PC-3 (cell line): ENCODE measurements at regions of chr4 and their contacts with region 1.

Region 1: GRCh38 chr4:11635359-11636072 is 206.8 kb upstream of the HS3ST1 start:
- DNase-seq: peak; percentile 89
- ATAC-seq: peak; percentile 65
- H3K4me3 ChIP-seq: no peak overlapping the region
- H3K27ac ChIP-seq: peak overlapping the region; percentile 98
- H3K4me1 ChIP-seq: peaks cover 62% of the 10 kb centered on the region
- H3K27me3 ChIP-seq: no peaks in the 10 kb centered on the region
- CTCF ChIP-seq: no peak

Region 2: GRCh38 chr4:11585506-11585905 is 50.0 kb before region 1 on chr4:
- CTCF ChIA-PET with region 1: no interaction called
- POLR2A ChIA-PET with region 1: no interaction called
- intact Hi-C with region 1: no loop called
- DNase-seq: peak; percentile 79
- ATAC-seq: peak; percentile 97
- H3K4me3 ChIP-seq: no peak overlapping the region
- H3K27ac ChIP-seq: peak overlapping the region; percentile 65
- H3K4me1 ChIP-seq: peaks cover 25% of the 10 kb centered on the region
- H3K27me3 ChIP-seq: no peaks in the 10 kb centered on the region
- CTCF ChIP-seq: no peak

Region 3: GRCh38 chr4:11614399-11614798 is 21.1 kb before region 1 on chr4:
- CTCF ChIA-PET with region 1: no interaction called
- POLR2A ChIA-PET with region 1: no interaction called
- intact Hi-C with region 1: loop called (anchors 1 kb)
- DNase-seq: peak; percentile 94
- ATAC-seq: peak; percentile 91
- H3K4me3 ChIP-seq: peak overlapping the region; percentile 30; the same call in 1 of the 2 replicates
- H3K27ac ChIP-seq: peak overlapping the region; percentile 95
- H3K4me1 ChIP-seq: peaks cover 50% of the 10 kb centered on the region
- H3K27me3 ChIP-seq: no peaks in the 10 kb centered on the region
- CTCF ChIP-seq: no peak

Region 4: DNA sequence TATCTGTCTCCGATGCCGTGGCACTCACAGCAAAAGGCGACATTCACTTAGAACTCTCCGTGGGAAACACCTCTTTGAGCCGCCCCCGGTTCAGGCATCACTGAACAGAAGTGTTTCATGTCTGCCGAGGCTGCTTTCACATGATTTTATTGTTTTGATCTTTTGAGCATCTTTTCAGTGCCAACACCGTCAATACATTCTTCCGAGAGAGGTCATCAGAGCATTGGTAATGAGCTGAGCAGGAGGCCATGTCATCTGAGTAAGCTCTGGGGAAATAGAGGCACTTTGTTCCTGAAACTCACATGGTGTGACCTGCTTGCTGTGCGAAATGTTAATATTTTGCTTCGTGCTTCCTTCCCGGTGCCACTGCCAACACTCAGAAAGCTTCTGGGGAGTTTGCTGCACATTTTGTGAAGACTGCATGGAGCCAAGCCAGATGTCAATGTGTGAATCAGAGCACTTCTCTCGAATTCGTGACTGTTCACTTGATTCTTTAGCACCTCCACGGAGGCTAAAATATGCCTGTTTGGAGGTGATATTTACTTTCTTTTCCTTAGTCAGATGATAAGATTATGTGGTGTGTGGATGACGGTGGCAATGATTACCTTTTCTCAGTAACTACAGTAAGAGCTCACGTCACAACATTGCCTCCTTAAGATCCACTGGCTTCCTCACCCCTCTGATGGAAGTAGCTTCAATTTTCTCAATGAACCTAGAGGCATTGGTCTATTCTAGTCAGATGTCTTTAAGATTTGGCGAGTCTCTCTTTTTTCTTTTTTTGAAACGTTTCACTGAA is 15.5 kb after region 1 on chr4:
- CTCF ChIA-PET with region 1: no interaction called
- POLR2A ChIA-PET with region 1: interaction called, 10 read pairs
- intact Hi-C with region 1: no loop called
- DNase-seq: peak; percentile 50
- ATAC-seq: peak; percentile 73
- H3K4me3 ChIP-seq: peak overlapping the region; percentile 51
- H3K27ac ChIP-seq: peak overlapping the region; percentile 69
- H3K4me1 ChIP-seq: peaks cover 8% of the 10 kb centered on the region
- H3K27me3 ChIP-seq: no peaks in the 10 kb centered on the region
- CTCF ChIP-seq: 0 out of 2 replicates have a peak, but pooled peaks have one; percentile 11

Region 5: GRCh38 chr4:11698846-11699590 is 63.5 kb after region 1 on chr4:
- CTCF ChIA-PET with region 1: interaction called, 3 read pairs
- POLR2A ChIA-PET with region 1: interaction called, 9 read pairs
- intact Hi-C with region 1: loop called (anchors 2 kb)
- DNase-seq: peak; percentile 92
- ATAC-seq: peak; percentile 90
- H3K4me3 ChIP-seq: peak overlapping the region; percentile 20; the same call in 1 of the 2 replicates
- H3K27ac ChIP-seq: peak overlapping the region; percentile 95
- H3K4me1 ChIP-seq: peaks cover 58% of the 10 kb centered on the region
- H3K27me3 ChIP-seq: no peaks in the 10 kb centered on the region
- CTCF ChIP-seq: no peak

Region 6: GRCh38 chr4:11805842-11806241 is 170.3 kb after region 1 on chr4:
- CTCF ChIA-PET with region 1: no interaction called
- POLR2A ChIA-PET with region 1: no interaction called
- intact Hi-C with region 1: no loop called
- DNase-seq: peak; percentile 37
- ATAC-seq: peak; percentile 76
- H3K4me3 ChIP-seq: no peak overlapping the region
- H3K27ac ChIP-seq: no peak overlapping the region
- H3K4me1 ChIP-seq: no peaks in the 10 kb centered on the region
- H3K27me3 ChIP-seq: no peaks in the 10 kb centered on the region
- CTCF ChIP-seq: peak; percentile 61